ENCODE measurements at regions of chr2 and their contacts with region 1.

Region 1: DNA sequence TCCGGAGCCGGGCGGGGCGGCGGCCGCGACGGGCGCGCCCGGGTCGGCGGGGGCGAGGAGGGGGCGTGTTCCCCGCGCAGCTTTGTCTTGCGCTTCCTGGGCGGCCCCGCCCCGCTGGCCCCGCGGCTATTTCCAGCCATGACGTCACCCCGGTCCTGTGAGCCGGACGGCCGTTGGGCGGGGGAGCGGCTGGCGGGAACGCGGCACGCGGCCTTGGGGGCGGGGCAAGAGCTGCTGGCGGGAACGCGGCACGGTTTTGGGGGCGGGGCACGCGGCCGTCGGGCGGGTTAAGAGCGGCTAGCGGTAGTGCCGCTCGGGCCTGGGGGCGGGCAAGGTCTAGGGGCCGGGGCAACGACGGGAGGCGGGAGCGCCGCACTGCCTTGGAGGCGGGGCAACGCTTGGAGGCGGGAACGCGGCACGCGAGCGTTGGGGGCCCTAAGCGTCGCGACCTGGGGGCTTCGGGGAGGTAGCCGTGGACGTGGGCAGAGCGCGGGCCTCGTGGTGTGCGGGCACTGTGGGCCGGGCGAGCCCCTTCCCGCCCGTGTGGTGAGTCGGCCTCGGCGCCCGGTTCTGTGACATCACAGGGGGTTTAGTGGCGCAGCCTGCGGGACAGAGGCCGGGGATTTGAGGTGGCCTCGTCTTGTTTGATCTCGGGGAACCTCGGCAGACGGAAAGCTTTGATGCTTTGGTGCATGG is 704 bp downstream of the KLF11 start:
- DNase-seq: peak; percentile 93
- H3K4me3 ChIP-seq: peak overlapping the region; percentile 64
- H3K27ac ChIP-seq: peak overlapping the region; percentile 59
- H3K4me1 ChIP-seq: peaks cover 8% of the 10 kb centered on the region
- CTCF ChIP-seq: no peak

Region 2: DNA sequence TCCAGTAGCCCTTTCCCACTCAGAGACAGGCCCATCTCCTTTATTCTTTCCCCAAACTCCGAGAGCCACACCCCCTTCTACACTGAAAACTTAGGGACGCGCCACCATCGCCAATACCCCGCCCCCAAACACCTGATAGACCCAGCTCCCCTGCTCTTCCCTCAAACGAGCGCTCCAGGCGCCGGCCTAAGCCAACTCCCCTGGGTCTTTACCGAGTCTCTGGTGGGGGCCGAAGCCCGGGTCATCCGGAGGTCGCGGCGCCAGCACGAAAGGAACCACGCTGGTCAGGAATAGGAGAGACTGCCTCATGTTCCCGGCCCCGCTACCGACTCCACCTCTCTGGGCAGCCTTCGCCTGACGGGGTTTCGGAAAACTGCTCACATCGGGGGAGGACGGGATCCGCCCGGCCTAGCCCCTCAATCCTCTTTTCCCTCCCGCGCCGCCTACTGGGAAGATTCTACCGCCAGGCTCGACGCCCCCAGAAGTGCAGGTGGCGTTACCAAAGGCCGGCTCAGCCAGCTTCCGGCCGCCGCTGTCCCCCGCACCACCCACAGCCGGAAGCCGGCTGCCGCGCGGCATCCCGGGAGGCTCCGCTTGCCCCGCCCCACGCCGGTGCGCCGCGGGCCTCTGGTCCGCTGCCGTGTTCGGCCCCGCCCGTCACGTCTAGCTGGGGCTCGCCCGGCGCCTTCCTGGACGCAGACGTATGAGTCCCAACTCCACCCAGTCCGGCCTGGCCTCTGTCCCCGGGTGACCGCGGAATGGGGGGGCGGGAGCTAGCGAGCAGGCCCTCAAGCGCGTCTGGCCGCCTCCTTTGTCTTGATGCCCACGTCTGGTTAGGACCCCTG is 488.5 kb before region 1 on chr2 and contains the start of gene ADAM17:
- CTCF ChIA-PET with region 1: no interaction called
- POLR2A ChIA-PET with region 1: no interaction called
- intact Hi-C with region 1: loop called (anchors 10 kb)
- DNase-seq: peak; percentile 94
- H3K4me3 ChIP-seq: peak within 1 kb of the TSS; percentile 89
- H3K27ac ChIP-seq: peak within 1 kb of the TSS; percentile 97
- H3K4me1 ChIP-seq: peaks cover 30% of the 10 kb centered on the region
- CTCF ChIP-seq: peak; percentile 70
- total RNA-seq, gene ADAM17: 46.9 and 50.5 TPM in 2 replicates

Region 3: DNA sequence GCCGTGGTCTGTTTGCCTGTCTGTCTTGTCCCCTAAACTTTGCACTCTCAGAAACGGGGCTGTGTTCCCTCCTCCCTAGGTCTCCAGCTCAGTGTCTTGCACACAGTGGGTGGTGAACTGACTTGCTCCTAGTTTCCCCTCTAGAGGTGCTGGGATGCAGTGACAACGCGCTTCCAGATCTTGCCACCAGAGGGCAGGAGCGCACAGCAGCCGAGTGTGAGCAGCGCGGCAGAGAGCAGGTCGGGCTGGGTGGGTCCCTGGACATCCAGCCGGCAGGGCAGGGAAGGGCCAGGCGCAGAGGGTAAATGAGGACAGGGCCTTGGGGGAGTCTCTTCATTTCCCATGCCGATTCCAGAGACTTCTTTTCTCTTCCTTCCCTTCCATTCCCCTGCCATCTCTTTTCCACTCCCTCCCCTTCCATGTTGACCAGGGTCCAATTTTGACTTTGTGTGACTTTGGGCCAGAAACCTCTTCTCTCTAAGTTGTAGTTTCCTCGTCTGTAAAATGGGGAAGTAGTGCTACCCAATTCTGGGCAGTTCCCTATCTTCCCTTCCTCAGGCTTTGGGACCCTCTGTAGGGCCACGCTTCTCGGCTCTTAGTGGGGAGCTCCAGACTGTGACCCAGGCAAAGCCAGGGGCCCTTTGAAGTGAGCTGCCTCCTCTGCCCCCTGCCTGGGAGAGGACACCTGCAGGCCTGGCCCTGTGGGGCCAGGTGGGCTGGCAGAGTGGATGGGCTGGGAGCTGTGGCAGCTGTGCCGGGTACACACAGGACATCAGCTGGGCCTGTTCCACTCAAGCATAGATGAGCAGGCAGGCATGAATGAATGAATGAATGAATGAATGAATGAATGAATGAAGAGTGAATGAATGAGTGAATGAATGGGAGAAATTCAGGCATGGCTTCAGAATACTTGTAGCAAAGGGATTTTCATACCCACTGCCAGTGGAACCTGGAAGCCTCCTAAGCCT is 244.1 kb before region 1 on chr2:
- CTCF ChIA-PET with region 1: no interaction called
- POLR2A ChIA-PET with region 1: no interaction called
- intact Hi-C with region 1: loop called (anchors 1 kb)
- DNase-seq: peak; percentile 77
- H3K4me3 ChIP-seq: no peak overlapping the region
- H3K27ac ChIP-seq: no peak overlapping the region
- H3K4me1 ChIP-seq: peaks cover 7% of the 10 kb centered on the region
- CTCF ChIP-seq: peak; percentile 96

Region 4: GRCh38 chr2:9951272-9951972 is 92.6 kb before region 1 on chr2 and contains the start of gene GRHL1:
- CTCF ChIA-PET with region 1: no interaction called
- POLR2A ChIA-PET with region 1: no interaction called
- intact Hi-C with region 1: loop called (anchors 1 kb)
- DNase-seq: peak; percentile 93
- H3K4me3 ChIP-seq: peak within 1 kb of the TSS; percentile 77
- H3K27ac ChIP-seq: no peak within 1 kb of the TSS
- H3K4me1 ChIP-seq: peaks cover 12% of the 10 kb centered on the region
- CTCF ChIP-seq: no peak
- total RNA-seq, gene GRHL1: 0.19 and 2.4 TPM in 2 replicates

Region 5: GRCh38 chr2:10122386-10123280 is 78.6 kb after region 1 on chr2 and contains the start of gene RRM2:
- CTCF ChIA-PET with region 1: no interaction called
- POLR2A ChIA-PET with region 1: interaction called, 3 read pairs
- intact Hi-C with region 1: loop called (anchors 1 kb)
- DNase-seq: peak; percentile 97
- H3K4me3 ChIP-seq: peak within 1 kb of the TSS; percentile 81
- H3K27ac ChIP-seq: peak within 1 kb of the TSS; percentile 91
- H3K4me1 ChIP-seq: peaks cover 54% of the 10 kb centered on the region
- CTCF ChIP-seq: no peak
- total RNA-seq, gene RRM2: 181 and 222 TPM in 2 replicates

Region 6: GRCh38 chr2:10424051-10424450 is 380.0 kb after region 1 on chr2:
- CTCF ChIA-PET with region 1: no interaction called
- POLR2A ChIA-PET with region 1: no interaction called
- intact Hi-C with region 1: no loop called
- DNase-seq: no peak
- H3K4me3 ChIP-seq: no peak overlapping the region
- H3K27ac ChIP-seq: no peak overlapping the region
- H3K4me1 ChIP-seq: no peaks in the 10 kb centered on the region
- CTCF ChIP-seq: no peak

Measured in OCI-LY7 (cell line).